ENCODE measurements at regions of chr16 and their contacts with region 1.

Region 1: GRCh38 chr16:57734925-57735754 is 430 bp upstream of the KATNB1 start:
- DNase-seq: peak; percentile 98
- ATAC-seq: peak; percentile 95
- H3K4me3 Mint-ChIP-seq: peak overlapping the region; percentile 92
- H3K27ac Mint-ChIP-seq: peak overlapping the region; percentile 96
- H3K4me1 Mint-ChIP-seq: peaks cover 22% of the 10 kb centered on the region
- H3K27me3 Mint-ChIP-seq: no peaks in the 10 kb centered on the region

Region 2: GRCh38 chr16:57300387-57301125 is 434.6 kb before region 1 on chr16:
- CTCF ChIA-PET with region 1: no interaction called
- POLR2A ChIA-PET with region 1: no interaction called
- intact Hi-C with region 1: loop called in 1 of 2 experiments (anchors 1 kb)
- DNase-seq: peak; percentile 99
- ATAC-seq: peak; percentile 89
- H3K4me3 Mint-ChIP-seq: no peak overlapping the region
- H3K27ac Mint-ChIP-seq: no peak overlapping the region
- H3K4me1 Mint-ChIP-seq: peaks cover 3% of the 10 kb centered on the region
- H3K27me3 Mint-ChIP-seq: no peaks in the 10 kb centered on the region

Region 3: DNA sequence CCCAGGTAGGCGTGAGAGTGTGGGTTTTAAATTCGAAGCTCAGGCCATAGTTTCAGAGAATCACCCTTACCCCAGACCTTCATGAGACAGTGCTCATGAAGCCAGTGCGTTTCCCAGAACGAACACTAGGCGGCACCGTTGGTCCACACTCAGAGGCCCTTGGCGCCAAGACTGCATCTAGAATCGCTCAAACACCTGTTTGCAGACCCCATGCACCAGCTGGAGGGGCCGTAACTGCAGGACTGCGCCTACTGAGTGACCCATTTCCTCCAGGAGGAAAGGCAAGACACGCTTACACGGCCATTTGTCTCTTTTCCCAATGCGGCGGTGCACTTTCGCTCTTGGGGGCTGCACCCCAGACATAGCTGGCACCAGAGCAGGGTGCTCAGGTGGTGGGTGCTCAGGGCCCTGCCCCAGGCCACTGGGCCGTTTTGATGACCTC is 158.7 kb before region 1 on chr16:
- CTCF ChIA-PET with region 1: interaction called, 12 read pairs
- POLR2A ChIA-PET with region 1: no interaction called
- intact Hi-C with region 1: loop called (anchors 1 to 5 kb)
- DNase-seq: peak; percentile 91
- ATAC-seq: peak; percentile 82
- H3K4me3 Mint-ChIP-seq: no peak overlapping the region
- H3K27ac Mint-ChIP-seq: no peak overlapping the region
- H3K4me1 Mint-ChIP-seq: peaks cover 33% of the 10 kb centered on the region
- H3K27me3 Mint-ChIP-seq: peaks cover 5% of the 10 kb centered on the region

Region 4: DNA sequence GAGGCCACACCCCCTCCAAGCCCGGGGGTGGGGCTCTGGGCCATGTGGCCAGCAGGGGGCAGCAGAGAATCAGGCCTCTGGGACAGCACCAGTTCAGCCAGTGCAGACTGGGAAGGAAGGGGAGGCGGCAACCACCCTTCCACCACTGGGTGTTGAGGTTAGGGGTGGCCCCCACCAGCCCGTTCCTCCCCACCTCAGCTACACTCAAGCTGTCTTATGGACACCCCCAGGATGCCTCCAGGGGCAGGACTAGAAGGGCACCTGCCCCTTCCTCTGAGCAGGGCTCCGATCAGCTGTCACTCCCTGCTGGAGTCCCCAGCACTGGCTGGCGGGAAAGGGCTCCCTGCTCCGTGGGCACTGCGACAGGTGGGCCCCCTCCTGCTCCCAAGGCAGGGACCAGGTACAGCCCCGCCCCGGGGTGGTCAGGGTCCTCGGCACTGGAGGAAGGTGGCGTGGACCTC is 22.2 kb after region 1 on chr16:
- CTCF ChIA-PET with region 1: interaction called, 16 read pairs
- POLR2A ChIA-PET with region 1: no interaction called
- intact Hi-C with region 1: loop called in 1 of 2 experiments (anchors 1 kb)
- DNase-seq: peak; percentile 93
- ATAC-seq: peak; percentile 98
- H3K4me3 Mint-ChIP-seq: no peak overlapping the region
- H3K27ac Mint-ChIP-seq: no peak overlapping the region
- H3K4me1 Mint-ChIP-seq: peaks cover 2% of the 10 kb centered on the region
- H3K27me3 Mint-ChIP-seq: no peaks in the 10 kb centered on the region

Region 5: DNA sequence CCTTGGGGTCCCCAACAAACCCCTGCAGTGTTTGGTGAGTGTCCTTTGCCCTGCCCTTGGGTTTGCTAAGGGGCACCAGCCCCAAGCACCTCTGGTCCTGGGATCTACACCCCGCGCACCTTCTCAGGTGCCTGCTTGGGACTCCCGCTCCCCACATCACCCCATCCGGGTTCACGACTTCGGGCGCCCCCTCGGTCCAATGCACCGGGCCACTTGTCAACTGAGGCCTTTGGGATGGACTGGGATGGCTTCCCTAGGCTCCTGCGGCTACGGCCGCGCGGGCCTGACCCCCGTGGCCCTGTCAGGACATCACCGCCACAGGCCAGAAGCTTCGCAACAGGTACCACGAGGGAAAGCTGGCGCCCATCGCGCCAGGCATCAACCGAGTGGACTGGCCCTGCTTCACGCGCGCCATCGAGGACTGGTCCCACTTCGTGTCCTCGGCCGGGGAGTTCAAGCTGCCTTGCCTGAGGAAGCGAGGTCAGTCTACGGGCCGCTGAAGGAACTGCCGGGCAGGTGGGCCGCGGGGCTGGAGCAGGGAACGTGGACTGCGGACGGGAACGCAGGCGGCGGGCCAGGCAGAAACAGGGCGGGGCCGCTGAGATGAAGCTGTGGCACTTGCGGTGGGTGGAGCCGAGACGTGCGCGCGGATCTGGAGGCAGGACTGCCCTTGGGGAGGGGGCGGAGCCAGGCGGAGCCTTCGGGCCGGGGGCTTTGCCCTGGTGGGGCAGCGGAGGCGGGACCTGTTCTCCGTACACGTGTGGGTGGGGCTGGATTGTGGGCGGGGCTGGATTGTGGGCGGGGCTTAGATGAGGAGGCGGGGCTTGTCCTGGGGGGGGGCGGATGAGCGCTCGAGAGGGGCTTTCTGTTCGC is 249.4 kb after region 1 on chr16:
- CTCF ChIA-PET with region 1: no interaction called
- POLR2A ChIA-PET with region 1: no interaction called
- intact Hi-C with region 1: loop called in 1 of 2 experiments (anchors 1 kb)
- DNase-seq: peak; percentile 97
- ATAC-seq: peak; percentile 100
- H3K4me3 Mint-ChIP-seq: peak overlapping the region; percentile 76
- H3K27ac Mint-ChIP-seq: no peak overlapping the region
- H3K4me1 Mint-ChIP-seq: peaks cover 7% of the 10 kb centered on the region
- H3K27me3 Mint-ChIP-seq: no peaks in the 10 kb centered on the region

Region 6: DNA sequence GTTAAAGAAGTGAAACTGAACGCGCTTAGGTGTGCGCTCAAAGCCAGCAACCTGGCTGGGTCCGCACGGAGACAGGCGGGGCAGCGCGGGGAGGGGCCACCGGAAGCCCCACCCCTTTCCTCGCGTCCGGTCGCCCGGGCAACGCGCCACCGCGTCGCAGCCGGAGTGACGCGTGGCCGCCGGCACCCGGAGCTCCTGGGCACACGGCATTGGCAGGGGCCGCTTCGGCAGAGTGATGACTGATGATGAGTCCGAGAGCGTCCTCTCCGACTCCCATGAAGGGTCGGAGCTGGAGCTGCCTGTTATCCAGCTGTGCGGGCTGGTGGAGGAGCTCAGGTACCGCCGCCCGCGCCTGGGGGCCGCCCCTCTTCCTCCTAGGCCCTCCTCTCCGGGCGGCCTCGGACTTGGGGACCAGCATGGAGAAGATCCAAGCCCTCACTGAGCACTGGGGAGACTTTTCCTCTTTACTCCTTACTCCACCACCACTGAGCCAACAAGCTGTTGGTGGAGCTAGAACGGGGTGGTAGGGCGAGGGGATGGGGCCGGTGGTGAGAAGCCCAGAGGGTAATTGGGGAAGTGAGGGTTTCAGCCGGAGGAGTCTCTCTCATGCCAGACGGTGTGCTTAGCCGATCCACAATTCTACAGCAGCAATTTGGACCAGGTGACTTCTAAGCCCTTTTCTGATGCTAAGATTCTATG is 514.8 kb after region 1 on chr16:
- CTCF ChIA-PET with region 1: no interaction called
- POLR2A ChIA-PET with region 1: no interaction called
- intact Hi-C with region 1: loop called in 1 of 2 experiments (anchors 1 kb)
- DNase-seq: peak; percentile 92
- ATAC-seq: peak; percentile 98
- H3K4me3 Mint-ChIP-seq: peak overlapping the region; percentile 81
- H3K27ac Mint-ChIP-seq: peak overlapping the region; percentile 85
- H3K4me1 Mint-ChIP-seq: peaks cover 8% of the 10 kb centered on the region
- H3K27me3 Mint-ChIP-seq: no peaks in the 10 kb centered on the region

Region 7: GRCh38 chr16:58629572-58630104 is 894.5 kb after region 1 on chr16 and contains the start of gene CNOT1:
- CTCF ChIA-PET with region 1: no interaction called
- POLR2A ChIA-PET with region 1: no interaction called
- intact Hi-C with region 1: loop called in 1 of 2 experiments (anchors 1 kb)
- DNase-seq: peak; percentile 99
- ATAC-seq: peak; percentile 89
- H3K4me3 Mint-ChIP-seq: peak within 1 kb of the TSS; percentile 100
- H3K27ac Mint-ChIP-seq: peak within 1 kb of the TSS; percentile 100
- H3K4me1 Mint-ChIP-seq: peaks cover 27% of the 10 kb centered on the region
- H3K27me3 Mint-ChIP-seq: no peaks in the 10 kb centered on the region
- total RNA-seq, gene CNOT1: 265 to 348 TPM